ENCODE measurements at regions of chr5 and their contacts with region 1.

Region 1: DNA sequence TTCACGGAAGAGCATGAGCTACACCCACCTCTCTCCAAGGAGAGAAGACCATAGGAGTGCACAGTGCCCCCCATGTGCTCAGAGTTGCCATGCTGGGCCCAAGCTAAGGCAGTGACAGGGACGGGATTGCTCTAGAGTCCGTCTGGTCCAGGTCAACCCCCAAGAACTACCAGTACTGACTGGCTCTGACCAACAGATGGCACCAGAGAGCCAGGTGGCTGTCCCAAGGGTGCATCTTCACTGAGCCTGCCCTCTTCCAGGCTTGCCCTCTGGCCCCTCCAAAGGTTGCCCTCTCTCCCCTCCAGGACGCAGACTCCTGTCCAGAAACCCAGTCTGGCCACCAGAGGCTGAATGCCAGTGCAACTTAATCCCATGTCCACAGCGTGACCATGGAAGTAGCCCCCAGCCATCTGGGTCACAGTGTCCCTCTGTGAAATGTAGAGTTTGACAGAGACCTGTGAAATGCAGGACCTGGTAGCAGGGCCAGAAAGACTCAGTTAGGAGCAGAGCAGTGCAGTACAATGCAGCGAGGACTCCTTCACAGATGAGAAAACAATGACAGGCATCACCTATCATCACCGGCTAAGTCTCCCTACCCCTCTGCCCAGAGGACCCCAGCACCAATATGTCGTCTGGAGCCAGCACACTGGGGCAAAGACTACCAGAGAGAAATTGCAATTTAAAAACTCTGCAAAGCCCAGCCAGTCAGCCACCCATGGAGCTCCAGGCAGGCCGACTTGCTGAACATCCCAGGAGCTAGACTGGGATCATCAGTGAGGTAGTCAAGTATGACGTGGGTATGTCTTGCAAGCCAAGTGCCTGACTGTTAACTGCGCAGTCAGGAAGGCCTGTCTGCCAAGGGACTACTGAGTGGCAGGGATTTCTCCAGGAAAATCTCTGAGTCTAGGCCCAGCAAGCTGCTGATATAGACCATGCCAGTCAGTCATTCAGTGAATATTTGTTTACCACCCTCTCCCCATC is 7.7 kb upstream of the SKP1 start:
- DNase-seq: peak; percentile 64 to 70
- H3K4me3 ChIP-seq: no peak overlapping the region
- H3K27ac ChIP-seq: peak overlapping the region in 2 of 3 donors; percentile 23 to 30
- H3K4me1 ChIP-seq: peaks cover 10 to 25% of the 10 kb centered on the region in 2 donors
- H3K27me3 ChIP-seq: no peaks in the 10 kb centered on the region
- CTCF ChIP-seq: peak; percentile 82 to 94 (median 89)
- POLR2A ChIP-seq: no peak

Region 2: DNA sequence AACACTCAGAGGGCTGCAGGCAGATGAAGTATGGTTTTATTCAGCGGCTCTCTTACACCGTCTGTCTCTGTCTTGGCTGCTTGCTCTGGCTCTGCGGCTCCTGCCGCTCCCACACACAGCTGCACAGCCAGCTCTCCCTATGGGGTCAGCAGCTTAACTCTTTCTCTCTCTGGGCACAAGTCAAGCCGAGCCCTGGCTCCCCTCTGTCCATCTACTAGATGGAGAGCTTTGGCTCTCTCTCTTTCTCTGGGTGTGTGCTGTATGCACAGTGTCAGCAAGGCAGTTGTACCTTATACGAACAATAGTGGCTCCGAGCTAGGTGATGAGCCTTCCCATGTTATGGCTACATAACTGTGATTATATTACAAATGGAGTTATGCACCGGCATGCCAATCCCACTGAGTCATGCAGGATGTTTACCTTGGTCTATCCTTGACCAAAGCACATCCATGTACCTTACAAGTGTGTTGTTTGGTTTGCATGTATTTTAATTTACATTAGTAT is 60.7 kb after region 1 on chr5:
- intact Hi-C with region 1: no loop called
- DNase-seq: no peak
- H3K4me3 ChIP-seq: no peak overlapping the region
- H3K27ac ChIP-seq: no peak overlapping the region
- H3K4me1 ChIP-seq: peaks cover 0 to 24% of the 10 kb centered on the region in 2 donors
- H3K27me3 ChIP-seq: no peaks in the 10 kb centered on the region
- CTCF ChIP-seq: no peak
- POLR2A ChIP-seq: no peak

Region 3: DNA sequence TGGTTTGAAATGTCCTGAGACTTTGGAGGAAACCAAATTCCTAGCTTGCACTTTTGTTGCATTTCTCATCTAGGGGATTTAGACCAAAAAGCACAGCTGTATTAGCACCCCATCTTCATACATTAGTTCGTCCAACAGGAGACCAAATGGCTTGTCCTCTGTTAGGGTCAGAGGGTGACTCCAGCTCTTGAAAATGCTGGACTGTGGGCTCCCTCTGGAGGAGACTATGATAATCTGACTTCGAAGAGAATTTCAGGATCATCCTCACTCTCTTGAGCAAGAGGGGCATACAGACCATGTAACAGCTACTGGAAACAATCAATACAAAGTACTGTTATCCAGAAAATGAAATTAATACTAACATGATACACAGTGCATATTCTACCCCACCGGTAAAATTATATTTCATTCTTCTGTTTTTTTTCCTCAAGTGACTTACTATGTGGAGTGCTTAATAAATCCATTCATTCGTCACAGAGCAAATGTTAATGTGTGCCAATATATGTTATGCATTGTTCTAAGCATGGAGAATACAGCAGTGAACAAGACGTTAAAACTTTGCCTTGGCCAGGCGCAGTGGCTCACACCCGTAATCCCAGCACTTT is 105.2 kb after region 1 on chr5:
- intact Hi-C with region 1: loop called (anchors 2 kb)
- DNase-seq: peak; percentile 45 to 53
- H3K4me3 ChIP-seq: no peak overlapping the region
- H3K27ac ChIP-seq: no peak overlapping the region
- H3K4me1 ChIP-seq: no peaks in the 10 kb centered on the region
- H3K27me3 ChIP-seq: no peaks in the 10 kb centered on the region
- CTCF ChIP-seq: peak; percentile 27 to 92 (median 72)
- POLR2A ChIP-seq: no peak

Region 4: DNA sequence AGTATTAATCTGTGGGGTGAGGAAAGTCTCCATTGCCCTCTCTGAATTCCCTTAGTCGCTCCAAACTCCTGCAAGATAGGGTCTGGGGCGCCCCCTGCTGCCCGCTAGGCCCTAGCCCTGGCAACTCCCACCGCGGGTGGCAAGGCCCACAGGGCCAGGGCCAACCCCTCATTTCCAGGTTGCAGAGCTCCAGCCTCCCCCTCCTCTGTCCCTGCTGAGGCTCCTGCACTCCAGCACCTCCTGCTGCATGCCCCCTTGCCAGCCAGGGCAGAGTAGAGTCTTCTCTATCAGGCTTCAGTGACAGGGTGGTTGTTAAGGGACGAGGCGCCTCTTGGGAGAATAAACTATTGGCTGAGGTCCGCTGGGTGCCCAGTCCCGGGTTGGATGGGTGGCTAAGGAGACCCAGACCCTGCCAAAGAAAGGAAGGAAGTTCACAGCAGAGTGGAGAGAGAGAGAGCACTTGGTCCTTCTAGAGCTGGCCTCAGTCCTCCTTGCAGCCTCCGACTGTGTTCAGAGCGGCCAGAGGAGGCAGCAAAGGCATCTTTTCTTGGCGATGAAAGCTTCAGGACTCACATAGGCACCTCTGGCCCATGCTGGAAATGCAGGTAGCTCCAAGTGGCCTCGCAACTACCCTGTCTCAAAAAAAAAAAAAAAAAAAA is 402.6 kb after region 1 on chr5:
- intact Hi-C with region 1: loop called (anchors 10 kb)
- DNase-seq: peak; percentile 84 to 86
- H3K4me3 ChIP-seq: no peak overlapping the region
- H3K27ac ChIP-seq: peak overlapping the region in 1 of 3 donors; percentile 33
- H3K4me1 ChIP-seq: peaks cover 12 to 21% of the 10 kb centered on the region in 2 donors
- H3K27me3 ChIP-seq: no peaks in the 10 kb centered on the region
- CTCF ChIP-seq: peak; percentile 33 to 80 (median 68)
- POLR2A ChIP-seq: no peak